ENCODE measurements at regions of chr15 and their contacts with region 1.

Region 1: DNA sequence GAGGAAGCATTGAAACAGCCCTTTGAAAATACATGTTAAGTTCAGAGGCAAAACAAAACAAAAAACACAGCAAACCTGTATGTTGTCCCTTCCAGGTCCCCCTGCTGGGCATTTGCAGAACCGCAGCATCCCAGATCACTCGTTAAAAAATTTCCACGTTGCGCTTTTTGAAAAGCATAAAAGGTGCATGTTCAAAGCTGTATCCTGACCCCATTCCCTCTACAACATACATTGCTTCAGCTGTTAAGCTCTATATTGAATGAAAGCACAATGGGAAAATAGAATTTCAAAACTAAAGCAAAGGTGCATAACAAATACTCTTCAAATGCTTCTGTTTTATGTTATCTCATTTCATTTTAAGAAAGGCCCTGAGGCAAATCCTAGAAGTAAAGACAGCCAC is 328.3 kb downstream of the THSD4 start:
- DNase-seq: peak; percentile 76
- H3K4me3 Mint-ChIP-seq: no peak overlapping the region
- H3K27ac Mint-ChIP-seq: no peak overlapping the region
- H3K4me1 Mint-ChIP-seq: peaks cover 3% of the 10 kb centered on the region
- H3K27me3 Mint-ChIP-seq: no peaks in the 10 kb centered on the region
- CTCF ChIP-seq: peak; percentile 89

Region 2: GRCh38 chr15:70892002-70892914 is 551.3 kb before region 1 on chr15 and contains the starts of genes LRRC49 and THAP10:
- CTCF ChIA-PET with region 1: no interaction called
- intact Hi-C with region 1: loop called (anchors 2 kb)
- DNase-seq: peak; percentile 94
- H3K4me3 Mint-ChIP-seq: peak within 1 kb of the TSS; percentile 97
- H3K27ac Mint-ChIP-seq: peak within 1 kb of the TSS; percentile 100
- H3K4me1 Mint-ChIP-seq: peaks cover 34% of the 10 kb centered on the region
- H3K27me3 Mint-ChIP-seq: no peaks in the 10 kb centered on the region
- CTCF ChIP-seq: no peak
- total RNA-seq, gene LRRC49: 5.8 and 6.3 TPM in 2 replicates
- total RNA-seq, gene THAP10: 11.8 and 13.7 TPM in 2 replicates

Region 3: GRCh38 chr15:71011503-71012155 is 431.9 kb before region 1 on chr15:
- CTCF ChIA-PET with region 1: interaction called, 13 read pairs
- intact Hi-C with region 1: loop called (anchors 1 kb)
- DNase-seq: peak; percentile 28
- H3K4me3 Mint-ChIP-seq: no peak overlapping the region
- H3K27ac Mint-ChIP-seq: no peak overlapping the region
- H3K4me1 Mint-ChIP-seq: no peaks in the 10 kb centered on the region
- H3K27me3 Mint-ChIP-seq: no peaks in the 10 kb centered on the region
- CTCF ChIP-seq: peak; percentile 71

Region 4: DNA sequence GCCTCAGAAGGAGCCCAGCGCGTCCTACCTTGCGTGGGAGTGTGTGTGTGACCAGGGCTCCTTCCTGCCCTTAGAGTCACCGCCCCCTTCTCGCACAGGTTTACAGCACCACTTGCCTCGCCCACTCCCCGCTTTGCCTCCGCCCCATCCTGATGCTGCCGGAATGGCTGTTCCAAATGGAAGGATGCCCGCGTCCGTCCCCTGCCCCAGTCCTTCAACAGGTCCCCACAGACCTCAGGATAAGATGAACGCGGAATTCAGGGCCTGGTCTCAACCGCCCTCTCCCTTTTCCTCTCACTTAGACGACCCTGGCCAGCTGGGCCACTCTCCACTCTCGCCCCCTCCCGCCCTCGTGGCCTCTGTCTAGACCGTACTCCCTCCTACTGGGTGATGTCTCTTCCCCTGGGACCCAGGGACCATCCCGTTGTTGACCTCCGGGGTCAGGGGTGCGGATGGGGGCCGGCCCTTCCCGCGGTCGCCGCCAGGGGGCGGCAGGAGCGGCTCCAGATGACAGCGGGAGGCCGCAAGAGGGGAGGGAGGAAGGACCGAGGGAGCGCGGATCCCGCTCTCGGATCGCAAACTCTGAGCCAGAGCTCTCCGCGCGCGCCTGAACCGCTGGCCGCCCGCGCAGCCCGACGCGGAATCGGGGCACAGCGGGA is 328.5 kb before region 1 on chr15 and contains the start of gene THSD4:
- CTCF ChIA-PET with region 1: interaction called, 17 read pairs
- intact Hi-C with region 1: loop called (anchors 1 kb)
- DNase-seq: peak; percentile 88
- H3K4me3 Mint-ChIP-seq: peak within 1 kb of the TSS; percentile 83
- H3K27ac Mint-ChIP-seq: peak within 1 kb of the TSS; percentile 83
- H3K4me1 Mint-ChIP-seq: peaks cover 44% of the 10 kb centered on the region
- H3K27me3 Mint-ChIP-seq: no peaks in the 10 kb centered on the region
- CTCF ChIP-seq: peak; percentile 99
- total RNA-seq, gene THSD4: 24.2 and 29.6 TPM in 2 replicates

Region 5: DNA sequence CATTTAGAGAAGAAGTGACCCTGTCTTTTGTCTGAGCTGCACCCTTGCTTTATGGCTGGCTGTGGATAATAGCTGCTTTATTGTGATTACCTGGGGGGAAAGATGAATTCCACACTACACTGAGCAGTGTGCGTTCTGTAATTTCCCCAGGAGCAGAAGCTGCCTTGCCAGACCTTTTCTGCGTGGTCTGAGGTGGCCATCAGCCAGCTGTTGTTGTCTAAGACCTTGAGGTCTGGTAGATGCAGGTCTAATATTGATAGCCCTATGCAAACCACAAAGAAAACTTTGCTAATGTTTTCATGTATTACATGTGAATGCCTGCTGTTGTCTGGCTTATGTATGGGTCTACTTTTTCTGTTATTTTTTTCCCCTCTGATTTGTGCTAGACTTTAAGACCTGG is 183.7 kb before region 1 on chr15:
- CTCF ChIA-PET with region 1: no interaction called
- intact Hi-C with region 1: no loop called
- DNase-seq: no peak
- H3K4me3 Mint-ChIP-seq: no peak overlapping the region
- H3K27ac Mint-ChIP-seq: no peak overlapping the region
- H3K4me1 Mint-ChIP-seq: peaks cover 6% of the 10 kb centered on the region
- H3K27me3 Mint-ChIP-seq: no peaks in the 10 kb centered on the region
- CTCF ChIP-seq: no peak

Region 6: GRCh38 chr15:71294886-71295638 is 148.5 kb before region 1 on chr15:
- CTCF ChIA-PET with region 1: no interaction called
- intact Hi-C with region 1: loop called (anchors 5 kb)
- DNase-seq: peak; percentile 79
- H3K4me3 Mint-ChIP-seq: no peak overlapping the region
- H3K27ac Mint-ChIP-seq: peak overlapping the region; percentile 77
- H3K4me1 Mint-ChIP-seq: peaks cover 83% of the 10 kb centered on the region
- H3K27me3 Mint-ChIP-seq: no peaks in the 10 kb centered on the region
- CTCF ChIP-seq: no peak

Region 7: DNA sequence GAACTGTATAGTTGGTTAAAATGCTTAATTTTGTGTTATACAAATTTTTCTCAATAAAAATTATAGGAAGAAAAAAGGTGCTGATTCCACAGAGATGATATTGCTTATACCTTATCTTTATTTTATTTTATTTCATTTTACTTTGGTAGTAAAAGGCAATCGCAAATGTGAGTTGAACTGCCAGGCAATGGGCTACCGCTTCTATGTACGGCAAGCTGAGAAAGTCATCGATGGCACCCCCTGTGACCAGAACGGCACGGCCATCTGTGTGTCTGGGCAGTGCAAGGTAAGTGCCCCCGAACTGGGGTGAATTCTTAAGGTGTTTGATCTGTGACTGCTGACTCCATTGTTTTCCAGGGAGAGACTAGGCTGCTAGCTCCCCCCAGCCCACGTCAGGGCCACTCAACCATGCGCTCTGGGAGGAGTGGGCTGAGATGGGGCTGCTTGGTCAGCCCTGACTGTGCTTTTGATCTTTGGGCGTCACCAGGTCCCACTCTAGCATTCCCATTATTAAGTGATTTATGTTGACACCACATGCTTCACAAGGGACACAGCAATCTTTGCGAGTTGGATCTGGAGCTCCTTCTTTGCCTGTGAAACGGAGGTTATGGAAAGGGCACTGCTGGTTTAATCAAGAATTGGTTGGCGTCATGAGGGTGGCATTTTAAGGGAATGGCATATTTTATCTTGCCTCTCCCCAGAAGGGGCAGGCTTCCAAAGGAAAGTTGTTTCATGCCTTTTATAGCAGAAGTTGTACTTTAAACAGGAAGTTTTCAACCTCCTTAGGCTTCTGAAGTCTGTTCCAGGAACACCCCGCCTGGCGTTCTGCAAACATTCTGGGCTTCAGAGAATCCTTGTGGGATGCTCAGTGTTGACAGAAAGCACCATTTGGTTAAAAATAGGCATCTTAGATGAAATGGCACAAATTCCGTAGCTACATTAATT is 31.7 kb before region 1 on chr15:
- CTCF ChIA-PET with region 1: interaction called, 7 read pairs
- intact Hi-C with region 1: loop called (anchors 1 kb)
- DNase-seq: peak; percentile 52
- H3K4me3 Mint-ChIP-seq: peak overlapping the region; percentile 15
- H3K27ac Mint-ChIP-seq: peak overlapping the region; percentile 52
- H3K4me1 Mint-ChIP-seq: peaks cover 32% of the 10 kb centered on the region
- H3K27me3 Mint-ChIP-seq: no peaks in the 10 kb centered on the region
- CTCF ChIP-seq: peak; percentile 19

Region 8: GRCh38 chr15:71588746-71589145 is 145.2 kb after region 1 on chr15:
- CTCF ChIA-PET with region 1: no interaction called
- intact Hi-C with region 1: no loop called
- DNase-seq: peak; percentile 27
- H3K4me3 Mint-ChIP-seq: no peak overlapping the region
- H3K27ac Mint-ChIP-seq: no peak overlapping the region
- H3K4me1 Mint-ChIP-seq: peaks cover 9% of the 10 kb centered on the region
- H3K27me3 Mint-ChIP-seq: no peaks in the 10 kb centered on the region
- CTCF ChIP-seq: no peak

Measured in Calu3 (cell line).